ENCODE measurements at regions of chr12 and their contacts with region 1.

Region 1: DNA sequence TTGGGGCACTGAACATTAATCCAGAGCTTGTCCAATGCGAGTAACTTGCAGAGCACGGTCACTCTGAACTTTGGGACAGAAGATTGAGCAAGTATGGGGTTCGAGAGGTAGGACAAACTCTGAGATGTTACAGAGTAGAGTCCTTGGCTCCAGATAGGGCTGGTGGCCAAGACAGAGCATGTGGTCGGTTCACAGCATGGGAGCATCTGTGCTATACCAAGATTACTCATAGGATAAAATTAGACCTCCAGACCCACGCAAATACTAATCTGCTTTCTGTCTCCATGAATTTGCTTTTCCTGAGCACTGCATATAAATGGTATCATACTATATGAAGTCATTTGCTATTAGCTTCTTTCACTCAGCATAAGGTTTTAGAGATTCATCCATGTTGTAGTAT is 93.4 kb upstream of the TBX5 start:
- DNase-seq: no peak

Region 2: DNA sequence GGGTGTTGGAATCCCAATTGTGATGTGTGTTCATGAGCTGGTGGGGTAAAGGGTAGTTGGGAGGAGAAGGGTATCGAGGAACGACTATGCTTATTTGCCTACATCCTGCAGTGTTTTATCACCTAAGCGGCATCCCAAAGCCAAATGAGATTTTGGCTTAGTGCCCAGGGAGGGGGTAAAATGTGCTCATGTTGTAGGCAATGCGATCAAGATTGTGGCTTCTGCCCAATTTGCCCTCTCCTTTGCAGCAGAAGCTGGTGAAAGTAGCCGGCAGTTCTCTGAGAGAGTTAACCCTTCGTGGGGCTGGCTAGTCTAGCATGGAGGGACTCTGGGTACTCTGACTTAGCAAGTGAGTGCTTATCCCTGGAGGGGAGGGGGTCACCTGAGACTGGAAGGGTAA is 1707.0 kb before region 1 on chr12:
- intact Hi-C with region 1: loop called in 1 of 2 experiments (anchors 5 kb)
- DNase-seq: no peak

Region 3: DNA sequence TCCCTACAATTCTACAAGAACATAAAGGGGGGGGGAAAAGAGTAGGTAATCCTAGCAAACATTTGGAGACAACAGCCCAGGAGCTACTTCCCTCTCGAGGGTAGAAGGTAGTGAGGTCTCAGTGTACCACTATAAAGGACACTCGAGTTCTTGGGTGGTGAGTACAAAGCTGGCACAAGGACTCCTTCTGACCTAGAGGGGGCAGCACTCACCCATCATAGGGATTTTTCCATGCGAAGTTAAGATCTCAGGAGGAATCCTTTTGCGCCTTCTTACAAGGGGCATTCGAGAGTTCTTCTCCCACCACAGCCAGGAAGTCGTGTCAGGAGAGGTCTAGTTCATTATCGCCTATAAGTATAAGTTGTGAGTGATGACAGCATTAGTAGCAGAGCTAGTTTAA is 333.0 kb before region 1 on chr12:
- intact Hi-C with region 1: loop called in 1 of 2 experiments (anchors 10 kb)
- DNase-seq: no peak

Region 4: DNA sequence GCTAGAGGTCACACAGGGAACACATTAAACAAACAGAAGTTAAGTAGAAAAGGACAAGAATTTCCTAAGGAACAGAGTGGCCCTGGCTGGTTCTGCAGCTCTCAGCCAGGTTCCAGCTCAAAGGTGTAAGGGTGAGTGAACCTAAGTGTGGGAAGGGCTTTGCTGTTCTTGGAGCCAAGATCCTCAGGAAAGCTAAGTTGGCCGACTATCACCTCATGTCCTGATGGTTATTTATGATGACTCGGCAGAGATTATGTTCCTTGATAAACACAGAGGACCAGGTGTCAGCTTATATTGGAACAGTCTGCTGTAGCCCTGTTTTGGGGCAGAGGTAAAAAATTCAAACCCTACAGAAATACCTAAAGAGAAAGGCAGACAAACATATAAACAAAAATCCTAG is 56.1 kb after region 1 on chr12:
- intact Hi-C with region 1: no loop called
- DNase-seq: no peak